Dorsolateral prefrontal cortex (tissue), 120 donors: ENCODE measurements at regions of chr12 and their contacts with region 1.

Region 1: GRCh38 chr12:101939856-101940265 is 62.5 kb downstream of the DRAM1 start:
- DNase-seq: peak in 6 of 10 donors; percentile 6 to 52 (median 40)
- H3K4me3 ChIP-seq: no peak overlapping the region
- H3K27ac ChIP-seq: no peak overlapping the region
- H3K27me3 ChIP-seq: peaks cover 0 to 5% (median 0%) of the 10 kb centered on the region in 45 donors
- CTCF ChIP-seq: peak; percentile 35 to 86 (median 70)

Region 2: DNA sequence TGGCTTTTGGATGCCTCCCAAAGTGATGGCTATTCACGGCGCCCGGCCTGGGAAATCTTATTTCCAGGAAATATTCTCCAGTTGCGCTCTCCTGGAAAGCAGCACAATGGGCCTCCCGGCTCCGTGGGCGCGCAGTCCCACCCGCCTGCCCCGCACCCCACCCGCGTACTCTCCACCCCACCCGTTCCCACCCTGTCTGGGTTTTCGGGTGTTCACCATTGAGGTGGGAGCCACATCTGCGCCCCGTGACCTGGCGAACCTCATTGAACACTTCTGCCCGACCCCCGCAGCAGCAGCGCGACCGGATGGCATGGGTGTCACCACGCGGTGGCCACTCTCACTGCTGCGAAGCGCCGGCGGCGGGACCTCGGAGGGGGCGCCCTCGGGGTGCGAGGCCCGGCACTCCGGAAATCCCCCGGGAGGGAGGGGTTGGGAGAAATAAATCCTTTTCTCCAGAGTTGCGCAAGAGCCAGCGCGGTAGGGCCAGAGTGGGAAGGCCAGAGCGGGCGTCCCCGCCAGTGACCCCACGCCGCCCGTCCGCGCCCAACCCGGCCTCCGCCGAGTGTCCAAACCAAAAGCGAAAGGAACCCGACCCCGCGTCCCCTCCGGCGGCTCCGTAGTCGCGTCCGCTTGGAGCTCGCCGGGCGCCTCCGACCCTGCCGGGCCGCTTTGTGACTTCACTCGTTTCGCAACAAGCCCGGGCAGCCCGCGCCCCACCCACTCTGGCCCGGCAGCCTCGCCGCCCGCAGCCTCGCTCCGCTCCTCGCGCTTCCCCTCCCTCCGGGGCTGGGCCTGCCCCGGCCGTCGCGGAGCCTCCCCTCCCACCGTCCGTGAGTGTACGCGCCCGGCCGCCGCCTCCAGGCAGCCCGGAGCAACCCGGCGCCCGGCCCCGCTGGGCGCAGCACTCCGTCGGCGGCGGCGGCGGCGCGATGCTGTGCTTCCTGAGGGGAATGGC is 62.7 kb before region 1 on chr12 and contains the start of gene DRAM1:
- intact Hi-C with region 1: no loop called
- DNase-seq: peak; percentile 17 to 74 (median 55)
- H3K4me3 ChIP-seq: peak within 1 kb of the TSS; percentile 53 to 92 (median 80)
- H3K27ac ChIP-seq: peak within 1 kb of the TSS in 58 of 59 donors; percentile 32 to 95 (median 84)
- H3K27me3 ChIP-seq: peaks cover 0 to 4% (median 0%) of the 10 kb centered on the region in 45 donors
- CTCF ChIP-seq: peak in 16 of 56 donors; percentile 6 to 36 (median 13)
- total RNA-seq, gene DRAM1: 1.5 to 7.6 (median 3.3) TPM

Region 3: DNA sequence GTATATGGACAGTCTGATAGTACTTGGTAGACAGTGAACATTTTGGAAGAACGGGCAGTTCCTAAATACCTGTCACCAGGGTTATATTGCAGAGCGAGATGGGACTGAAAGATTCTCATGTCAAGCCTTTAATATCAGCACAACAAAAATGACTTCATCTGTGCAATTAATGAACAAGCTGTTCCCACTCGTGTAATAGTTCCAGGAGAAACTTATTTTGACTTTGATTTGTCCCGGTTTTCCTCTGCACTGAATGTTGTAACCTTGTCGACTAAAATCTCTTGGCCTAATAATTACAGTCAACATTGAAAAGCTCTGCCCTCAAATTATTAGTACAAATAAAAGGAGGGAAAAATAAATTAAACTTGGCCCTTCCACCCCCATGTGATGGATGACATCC is 42.4 kb after region 1 on chr12:
- intact Hi-C with region 1: no loop called
- DNase-seq: no peak
- H3K4me3 ChIP-seq: no peak overlapping the region
- H3K27ac ChIP-seq: no peak overlapping the region
- H3K27me3 ChIP-seq: no peaks in the 10 kb centered on the region
- CTCF ChIP-seq: no peak

Region 4: DNA sequence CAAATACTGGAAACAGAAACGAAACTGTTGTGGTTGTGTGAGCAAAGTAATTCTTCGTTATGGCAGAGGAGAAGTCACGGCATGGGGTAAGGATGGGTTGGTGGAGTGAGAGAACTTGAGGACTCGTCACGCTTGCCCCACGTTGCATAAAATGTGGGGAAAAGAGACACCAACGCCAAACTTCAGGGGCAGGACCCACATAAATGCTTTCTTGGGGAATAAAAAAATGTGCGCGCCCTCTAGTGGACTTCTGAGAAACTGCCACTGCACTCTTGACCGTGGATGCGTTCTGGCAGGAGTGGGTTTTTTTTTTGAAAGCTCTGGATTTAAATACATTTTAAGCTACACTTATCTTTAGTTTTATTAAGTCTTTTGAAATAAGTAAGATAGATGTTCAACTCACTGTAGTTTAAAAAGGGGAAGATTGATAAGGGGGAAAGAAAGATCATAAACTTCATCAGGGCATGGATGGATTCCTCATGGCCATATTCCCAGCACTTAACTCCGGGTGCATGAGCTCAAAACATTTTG is 544.6 kb after region 1 on chr12:
- intact Hi-C with region 1: loop called (anchors 10 kb)
- DNase-seq: peak in 9 of 10 donors; percentile 19 to 54 (median 45)
- H3K4me3 ChIP-seq: peak overlapping the region in 39 of 59 donors; percentile 15 to 62 (median 33)
- H3K27ac ChIP-seq: peak overlapping the region in 2 of 59 donors; percentile 15 to 25
- H3K27me3 ChIP-seq: peaks cover 0 to 3% (median 0%) of the 10 kb centered on the region in 45 donors
- CTCF ChIP-seq: peak; percentile 84 to 98 (median 94)

Region 5: GRCh38 chr12:102769319-102769916 is 829.6 kb after region 1 on chr12:
- intact Hi-C with region 1: loop called (anchors 10 kb)
- DNase-seq: peak in 8 of 10 donors; percentile 27 to 74 (median 64)
- H3K4me3 ChIP-seq: no peak overlapping the region
- H3K27ac ChIP-seq: no peak overlapping the region
- H3K27me3 ChIP-seq: peaks cover 0 to 8% (median 0%) of the 10 kb centered on the region in 45 donors
- CTCF ChIP-seq: peak; percentile 37 to 82 (median 65)

Region 6: GRCh38 chr12:102776041-102776440 is 836.2 kb after region 1 on chr12:
- intact Hi-C with region 1: loop called in 1 of 2 experiments (anchors 10 kb)
- DNase-seq: no peak
- H3K4me3 ChIP-seq: no peak overlapping the region
- H3K27ac ChIP-seq: no peak overlapping the region
- H3K27me3 ChIP-seq: peaks cover 0 to 18% (median 0%) of the 10 kb centered on the region in 45 donors
- CTCF ChIP-seq: no peak